ENCODE measurements at regions of chr4 and their contacts with region 1.

Region 1: GRCh38 chr4:40199999-40200874 is 3.4 kb downstream of the RHOH start:
- DNase-seq: peak; percentile 63
- ATAC-seq: peak; percentile 19
- H3K4me3 ChIP-seq: peak overlapping the region; percentile 79 to 99 (median 90)
- H3K4me3 Mint-ChIP-seq: peak overlapping the region; percentile 96
- H3K27ac ChIP-seq: peak overlapping the region; percentile 93 to 99
- H3K27ac Mint-ChIP-seq: peak overlapping the region; percentile 91
- H3K4me1 ChIP-seq: peaks cover 53 to 60% of the 10 kb centered on the region in 2 donors
- H3K4me1 Mint-ChIP-seq: peaks cover 64% of the 10 kb centered on the region
- H3K27me3 ChIP-seq: no peaks in the 10 kb centered on the region
- H3K27me3 Mint-ChIP-seq: no peaks in the 10 kb centered on the region
- CTCF ChIP-seq: no peak

Region 2: GRCh38 chr4:39353478-39354253 is 846.6 kb before region 1 on chr4:
- CTCF ChIA-PET with region 1: no interaction called
- POLR2A ChIA-PET with region 1: no interaction called
- intact Hi-C with region 1: loop called (anchors 10 kb)
- DNase-seq: peak; percentile 67
- ATAC-seq: peak; percentile 59
- H3K4me3 ChIP-seq: peak overlapping the region; percentile 2 to 72 (median 43)
- H3K4me3 Mint-ChIP-seq: peak overlapping the region; percentile 90
- H3K27ac ChIP-seq: peak overlapping the region; percentile 46 to 74
- H3K27ac Mint-ChIP-seq: peak overlapping the region; percentile 89
- H3K4me1 ChIP-seq: peaks cover 50 to 54% of the 10 kb centered on the region in 2 donors
- H3K4me1 Mint-ChIP-seq: peaks cover 54% of the 10 kb centered on the region
- H3K27me3 ChIP-seq: no peaks in the 10 kb centered on the region
- H3K27me3 Mint-ChIP-seq: no peaks in the 10 kb centered on the region
- CTCF ChIP-seq: no peak

Region 3: GRCh38 chr4:39621582-39621981 is 578.7 kb before region 1 on chr4:
- CTCF ChIA-PET with region 1: no interaction called
- POLR2A ChIA-PET with region 1: interaction called, 4 read pairs
- intact Hi-C with region 1: loop called (anchors 10 kb)
- DNase-seq: no peak
- ATAC-seq: no peak
- H3K4me3 ChIP-seq: no peak overlapping the region
- H3K4me3 Mint-ChIP-seq: no peak overlapping the region
- H3K27ac ChIP-seq: peak overlapping the region in 1 of 2 donors; percentile 48
- H3K27ac Mint-ChIP-seq: peak overlapping the region; percentile 17
- H3K4me1 ChIP-seq: peaks cover 47 to 55% of the 10 kb centered on the region in 2 donors
- H3K4me1 Mint-ChIP-seq: peaks cover 64% of the 10 kb centered on the region
- H3K27me3 ChIP-seq: no peaks in the 10 kb centered on the region
- H3K27me3 Mint-ChIP-seq: no peaks in the 10 kb centered on the region
- CTCF ChIP-seq: no peak

Region 4: DNA sequence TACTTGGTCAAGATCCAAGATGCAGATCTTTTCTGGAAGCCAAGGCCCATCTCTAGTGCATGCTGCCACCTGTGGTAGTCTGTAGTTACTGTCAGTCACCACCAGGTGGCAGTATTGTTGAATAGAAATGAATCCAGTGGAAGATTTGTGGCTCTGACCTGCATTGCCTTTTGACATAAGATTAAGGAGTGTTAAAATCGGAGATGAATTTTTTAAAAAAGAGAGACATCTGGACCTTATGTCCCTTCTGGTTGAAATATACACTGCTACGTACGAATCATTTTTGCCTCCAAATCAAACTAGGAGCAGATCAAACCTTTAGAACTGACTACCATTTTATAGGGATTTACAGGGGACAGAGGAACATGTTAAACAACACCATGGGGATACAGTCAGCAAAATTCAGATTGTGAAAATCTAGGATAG is 50.3 kb before region 1 on chr4:
- CTCF ChIA-PET with region 1: interaction called, 50 read pairs
- POLR2A ChIA-PET with region 1: interaction called, 5 read pairs
- intact Hi-C with region 1: no loop called
- DNase-seq: peak; percentile 87
- ATAC-seq: peak; percentile 95
- H3K4me3 ChIP-seq: no peak overlapping the region
- H3K4me3 Mint-ChIP-seq: peak overlapping the region; percentile 27
- H3K27ac ChIP-seq: peak overlapping the region; percentile 20 to 54
- H3K27ac Mint-ChIP-seq: peak overlapping the region; percentile 77
- H3K4me1 ChIP-seq: peaks cover 22 to 32% of the 10 kb centered on the region in 2 donors
- H3K4me1 Mint-ChIP-seq: peaks cover 38% of the 10 kb centered on the region
- H3K27me3 ChIP-seq: no peaks in the 10 kb centered on the region
- H3K27me3 Mint-ChIP-seq: no peaks in the 10 kb centered on the region
- CTCF ChIP-seq: peak; percentile 83

Region 5: GRCh38 chr4:40185830-40186664 is 14.2 kb before region 1 on chr4:
- CTCF ChIA-PET with region 1: interaction called, 67 read pairs
- POLR2A ChIA-PET with region 1: interaction called, 40 read pairs
- intact Hi-C with region 1: loop called (anchors 1 kb)
- DNase-seq: peak; percentile 87
- ATAC-seq: peak; percentile 79
- H3K4me3 ChIP-seq: peak overlapping the region; percentile 11 to 61 (median 37)
- H3K4me3 Mint-ChIP-seq: peak overlapping the region; percentile 85
- H3K27ac ChIP-seq: peak overlapping the region; percentile 92 to 94
- H3K27ac Mint-ChIP-seq: peak overlapping the region; percentile 97
- H3K4me1 ChIP-seq: peaks cover 60 to 88% of the 10 kb centered on the region in 2 donors
- H3K4me1 Mint-ChIP-seq: peaks cover 76% of the 10 kb centered on the region
- H3K27me3 ChIP-seq: no peaks in the 10 kb centered on the region
- H3K27me3 Mint-ChIP-seq: no peaks in the 10 kb centered on the region
- CTCF ChIP-seq: no peak

Region 6: DNA sequence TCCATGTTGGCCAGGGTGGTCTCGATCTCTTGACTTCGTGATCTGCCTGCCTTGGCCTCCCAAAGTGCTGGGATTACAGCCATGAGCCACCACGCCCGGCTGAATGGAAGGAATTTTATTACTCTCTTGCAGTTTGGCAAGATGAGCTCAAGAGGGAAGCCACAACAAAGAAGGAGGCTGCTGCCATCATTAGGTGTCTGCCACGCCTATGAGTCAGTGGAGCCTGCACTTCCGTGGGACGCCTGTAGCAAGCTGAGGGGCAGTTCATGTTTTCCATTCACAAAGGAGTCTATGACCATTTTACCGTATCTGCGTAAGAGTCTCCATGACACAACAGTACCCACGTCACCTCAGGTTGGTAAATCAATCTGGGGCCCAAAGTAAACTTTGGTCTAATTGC is 83.7 kb after region 1 on chr4:
- CTCF ChIA-PET with region 1: no interaction called
- POLR2A ChIA-PET with region 1: no interaction called
- intact Hi-C with region 1: no loop called
- DNase-seq: peak; percentile 60
- ATAC-seq: peak; percentile 71
- H3K4me3 ChIP-seq: no peak overlapping the region
- H3K4me3 Mint-ChIP-seq: no peak overlapping the region
- H3K27ac ChIP-seq: no peak overlapping the region
- H3K27ac Mint-ChIP-seq: peak overlapping the region; percentile 63
- H3K4me1 ChIP-seq: peaks cover 24 to 49% of the 10 kb centered on the region in 2 donors
- H3K4me1 Mint-ChIP-seq: peaks cover 56% of the 10 kb centered on the region
- H3K27me3 ChIP-seq: no peaks in the 10 kb centered on the region
- H3K27me3 Mint-ChIP-seq: no peaks in the 10 kb centered on the region
- CTCF ChIP-seq: no peak

Region 7: GRCh38 chr4:40301603-40302002 is 101.4 kb after region 1 on chr4:
- CTCF ChIA-PET with region 1: interaction called, 70 read pairs
- POLR2A ChIA-PET with region 1: interaction called, 10 read pairs
- intact Hi-C with region 1: loop called (anchors 1 kb)
- DNase-seq: peak; percentile 91
- ATAC-seq: peak; percentile 70
- H3K4me3 ChIP-seq: peak overlapping the region in 2 of 5 experiments; percentile 5 to 51
- H3K4me3 Mint-ChIP-seq: peak overlapping the region; percentile 72
- H3K27ac ChIP-seq: peak overlapping the region; percentile 86 to 90
- H3K27ac Mint-ChIP-seq: peak overlapping the region; percentile 96
- H3K4me1 ChIP-seq: peaks cover 91 to 98% of the 10 kb centered on the region in 2 donors
- H3K4me1 Mint-ChIP-seq: peaks cover 84% of the 10 kb centered on the region
- H3K27me3 ChIP-seq: no peaks in the 10 kb centered on the region
- H3K27me3 Mint-ChIP-seq: no peaks in the 10 kb centered on the region
- CTCF ChIP-seq: no peak